ENCODE measurements at regions of chr3 and their contacts with region 1.

Region 1: GRCh38 chr3:162468791-162469190 is 972.2 kb downstream of the OTOL1 start:
- DNase-seq: no peak
- H3K4me3 ChIP-seq: no peak overlapping the region
- H3K27ac ChIP-seq: no peak overlapping the region
- H3K4me1 ChIP-seq: no peaks in the 10 kb centered on the region
- H3K27me3 ChIP-seq: no peaks in the 10 kb centered on the region
- CTCF ChIP-seq: no peak

Region 2: GRCh38 chr3:161474182-161475140 is 994.3 kb before region 1 on chr3:
- CTCF ChIA-PET with region 1: no interaction called
- POLR2A ChIA-PET with region 1: no interaction called
- intact Hi-C with region 1: no loop called
- DNase-seq: no peak
- H3K4me3 ChIP-seq: no peak overlapping the region
- H3K27ac ChIP-seq: no peak overlapping the region
- H3K4me1 ChIP-seq: peaks cover 8% of the 10 kb centered on the region; the same call in 1 of the 2 replicates
- H3K27me3 ChIP-seq: no peaks in the 10 kb centered on the region
- CTCF ChIP-seq: no peak

Region 3: GRCh38 chr3:162421721-162422120 is 47.1 kb before region 1 on chr3:
- CTCF ChIA-PET with region 1: no interaction called
- POLR2A ChIA-PET with region 1: no interaction called
- intact Hi-C with region 1: loop called (anchors 2 kb)
- DNase-seq: no peak
- H3K4me3 ChIP-seq: no peak overlapping the region
- H3K27ac ChIP-seq: no peak overlapping the region
- H3K4me1 ChIP-seq: no peaks in the 10 kb centered on the region
- H3K27me3 ChIP-seq: no peaks in the 10 kb centered on the region
- CTCF ChIP-seq: no peak

Region 4: GRCh38 chr3:162973518-162973917 is 504.7 kb after region 1 on chr3:
- CTCF ChIA-PET with region 1: no interaction called
- POLR2A ChIA-PET with region 1: no interaction called
- intact Hi-C with region 1: no loop called
- DNase-seq: no peak
- H3K4me3 ChIP-seq: no peak overlapping the region
- H3K27ac ChIP-seq: no peak overlapping the region
- H3K4me1 ChIP-seq: no peaks in the 10 kb centered on the region
- H3K27me3 ChIP-seq: no peaks in the 10 kb centered on the region
- CTCF ChIP-seq: no peak

Measured in PC-9 (cell line).